ENCODE measurements at regions of chr10 and their contacts with region 1.

Region 1: DNA sequence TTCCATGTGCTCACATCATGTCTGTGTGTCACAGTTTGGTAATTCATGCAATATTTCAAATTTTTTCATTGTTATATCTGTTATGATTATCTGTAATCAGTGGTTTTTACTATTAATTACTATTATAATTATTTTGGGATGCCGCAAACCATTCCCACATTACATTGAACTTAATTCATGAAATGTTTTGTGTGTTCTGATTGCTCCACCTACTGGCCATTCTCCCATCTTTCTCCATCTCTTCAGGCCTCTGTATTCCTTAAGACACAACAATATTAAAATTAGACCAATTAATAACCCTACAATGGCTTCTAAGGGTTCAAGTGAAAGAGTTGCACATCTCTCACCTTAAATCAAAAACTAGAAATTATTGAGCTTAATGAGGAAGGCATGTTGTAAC is 398.5 kb downstream of the PCDH15 start:
- DNase-seq: no peak
- ATAC-seq: no peak
- H3K4me3 ChIP-seq: no peak overlapping the region
- H3K27ac ChIP-seq: no peak overlapping the region
- H3K4me1 ChIP-seq: no peaks in the 10 kb centered on the region
- H3K27me3 ChIP-seq: no peaks in the 10 kb centered on the region
- CTCF ChIP-seq: peak; percentile 20 to 44 (median 44); a peak in 5 of 6 replicates
- EP300 ChIP-seq: no peak
- POLR2A ChIP-seq: no peak
- RAD21 ChIP-seq: peak; percentile 61

Region 2: DNA sequence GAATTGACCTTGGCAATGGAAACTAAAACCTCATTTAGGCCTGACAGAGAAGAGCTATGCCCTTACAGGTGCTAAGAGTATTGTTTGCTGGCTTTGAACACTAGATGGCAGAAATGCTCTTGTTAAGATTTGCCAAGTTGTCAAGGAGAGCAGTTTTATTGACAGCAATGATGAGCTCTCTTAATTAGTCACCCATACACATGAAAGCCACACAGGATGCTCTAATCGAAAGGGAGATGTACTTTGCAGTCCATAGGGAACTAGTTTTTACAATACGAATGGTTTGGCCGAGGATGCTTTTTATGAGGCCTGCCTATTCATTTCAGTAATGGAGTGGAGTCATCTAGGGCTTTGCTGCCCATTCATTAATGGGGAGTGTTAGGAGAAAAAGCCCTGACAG is 1584.6 kb before region 1 on chr10:
- CTCF ChIA-PET with region 1: no interaction called
- POLR2A ChIA-PET with region 1: no interaction called
- RAD21 ChIA-PET with region 1: no interaction called
- SMC1A ChIA-PET with region 1: no interaction called
- in situ Hi-C with region 1: no loop called
- intact Hi-C with region 1: loop called (anchors 10 kb)
- DNase-seq: peak; percentile 37
- ATAC-seq: peak; percentile 96
- H3K4me3 ChIP-seq: no peak overlapping the region
- H3K27ac ChIP-seq: no peak overlapping the region
- H3K4me1 ChIP-seq: no peaks in the 10 kb centered on the region
- H3K27me3 ChIP-seq: no peaks in the 10 kb centered on the region; a peak in 1 of 4 replicates
- CTCF ChIP-seq: peak; percentile 57 to 71 (median 68); a peak in 5 of 6 replicates
- EP300 ChIP-seq: no peak
- POLR2A ChIP-seq: no peak
- RAD21 ChIP-seq: peak; percentile 56

Region 3: DNA sequence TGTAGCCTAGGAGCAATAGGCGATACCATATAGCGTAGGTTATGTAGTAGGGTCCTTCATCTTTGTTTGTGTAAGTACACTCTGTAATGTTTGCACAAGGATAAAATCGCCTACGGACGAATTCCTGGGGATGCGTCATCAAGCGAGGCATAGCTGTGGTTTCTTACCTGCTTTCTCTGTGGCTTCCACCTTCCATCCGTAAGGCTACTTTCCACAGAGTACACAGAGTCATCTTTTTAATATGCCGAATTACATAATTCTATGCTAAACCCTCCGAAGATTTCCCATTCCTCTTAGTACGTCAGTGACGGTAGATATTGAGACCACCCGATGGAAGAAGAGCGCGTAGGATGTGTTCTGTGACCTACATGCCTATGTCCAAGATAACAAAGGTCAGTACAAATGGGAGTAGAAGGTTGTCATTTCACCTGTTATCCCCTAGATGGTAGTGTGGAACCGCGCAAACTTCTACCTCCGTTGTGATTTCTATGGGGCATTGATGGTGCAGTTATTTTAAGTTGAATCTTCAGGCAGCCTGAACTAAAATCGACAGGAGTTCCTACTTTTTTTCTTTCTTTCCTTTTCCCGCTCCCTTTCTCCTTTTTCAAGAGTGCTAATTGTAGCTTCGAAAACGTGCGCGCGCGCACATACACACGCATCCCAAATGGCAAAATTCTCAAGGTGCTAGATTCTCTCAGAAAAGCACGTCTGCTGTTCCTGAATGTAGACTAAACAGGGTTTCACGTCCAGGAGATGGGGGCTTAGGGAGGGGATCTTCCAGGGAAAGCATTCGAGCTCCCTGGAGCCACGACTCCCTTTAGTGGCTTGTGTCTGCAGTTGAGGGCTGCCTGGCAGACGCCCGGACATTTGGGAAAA is 1518.3 kb before region 1 on chr10:
- CTCF ChIA-PET with region 1: no interaction called
- POLR2A ChIA-PET with region 1: no interaction called
- RAD21 ChIA-PET with region 1: no interaction called
- SMC1A ChIA-PET with region 1: no interaction called
- in situ Hi-C with region 1: no loop called
- intact Hi-C with region 1: loop called (anchors 5 kb)
- DNase-seq: peak; percentile 25
- ATAC-seq: peak; percentile 95
- H3K4me3 ChIP-seq: no peak overlapping the region
- H3K27ac ChIP-seq: no peak overlapping the region
- H3K4me1 ChIP-seq: no peaks in the 10 kb centered on the region
- H3K27me3 ChIP-seq: no peaks in the 10 kb centered on the region; a peak in 1 of 4 replicates
- CTCF ChIP-seq: peak; percentile 78 to 84 (median 83)
- EP300 ChIP-seq: no peak
- POLR2A ChIP-seq: no peak
- RAD21 ChIP-seq: peak; percentile 90

Region 4: GRCh38 chr10:53601260-53601875 is 801.2 kb before region 1 on chr10:
- CTCF ChIA-PET with region 1: interaction called, 6 read pairs
- POLR2A ChIA-PET with region 1: interaction called, 3 read pairs
- RAD21 ChIA-PET with region 1: no interaction called
- SMC1A ChIA-PET with region 1: no interaction called
- in situ Hi-C with region 1: loop called (anchors 25 kb)
- intact Hi-C with region 1: loop called (anchors 1 kb)
- DNase-seq: no peak
- ATAC-seq: peak; percentile 79
- H3K4me3 ChIP-seq: no peak overlapping the region
- H3K27ac ChIP-seq: no peak overlapping the region
- H3K4me1 ChIP-seq: no peaks in the 10 kb centered on the region
- H3K27me3 ChIP-seq: no peaks in the 10 kb centered on the region
- CTCF ChIP-seq: peak; percentile 77 to 84 (median 78)
- EP300 ChIP-seq: no peak
- POLR2A ChIP-seq: no peak
- RAD21 ChIP-seq: peak; percentile 73

Region 5: GRCh38 chr10:53997953-53998352 is 404.6 kb before region 1 on chr10:
- CTCF ChIA-PET with region 1: interaction called, 14 read pairs
- POLR2A ChIA-PET with region 1: no interaction called
- RAD21 ChIA-PET with region 1: interaction called, 5 read pairs
- SMC1A ChIA-PET with region 1: interaction called, 7 read pairs
- in situ Hi-C with region 1: no loop called
- intact Hi-C with region 1: loop called (anchors 2 kb)
- DNase-seq: no peak
- ATAC-seq: peak; percentile 59; the same call in 2 of the 3 replicates
- H3K4me3 ChIP-seq: no peak overlapping the region
- H3K27ac ChIP-seq: no peak overlapping the region
- H3K4me1 ChIP-seq: no peaks in the 10 kb centered on the region
- H3K27me3 ChIP-seq: no peaks in the 10 kb centered on the region
- CTCF ChIP-seq: no peak; a peak in 1 of 6 replicates
- EP300 ChIP-seq: no peak
- POLR2A ChIP-seq: no peak
- RAD21 ChIP-seq: peak; percentile 54; the same call in 1 of the 2 replicates